WTC11 (cell line): ENCODE measurements at regions of chr11 and their contacts with region 1.

Region 1: GRCh38 chr11:17384002-17384511 is 4.4 kb downstream of the KCNJ11 start:
- DNase-seq: peak; percentile 84
- ATAC-seq: peak; percentile 71
- H3K4me3 Mint-ChIP-seq: no peak overlapping the region
- H3K27ac Mint-ChIP-seq: no peak overlapping the region
- H3K4me1 Mint-ChIP-seq: no peaks in the 10 kb centered on the region
- H3K27me3 Mint-ChIP-seq: peaks cover 7% of the 10 kb centered on the region
- CTCF ChIP-seq: peak; percentile 93

Region 2: DNA sequence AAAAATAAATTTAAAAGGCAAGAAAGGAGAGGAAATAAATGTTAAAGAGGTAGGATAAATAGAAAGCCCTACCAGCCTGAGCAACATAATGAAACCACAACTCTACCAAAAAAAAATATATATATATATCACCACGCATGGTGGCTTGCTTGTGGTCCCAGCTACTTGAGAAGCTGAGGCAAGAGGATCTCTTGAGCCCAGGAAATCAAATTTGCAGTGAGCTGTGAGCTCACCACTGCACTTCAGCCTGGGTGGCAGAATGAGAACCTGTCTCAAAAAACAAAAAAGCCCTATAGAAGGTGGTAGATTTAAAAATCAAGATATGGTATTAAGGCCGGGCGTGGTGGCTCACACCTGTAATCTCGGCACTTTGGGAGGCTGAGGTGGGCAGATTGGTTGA is 97.0 kb before region 1 on chr11:
- CTCF ChIA-PET with region 1: no interaction called
- POLR2A ChIA-PET with region 1: no interaction called
- DNase-seq: no peak
- ATAC-seq: no peak
- H3K4me3 Mint-ChIP-seq: no peak overlapping the region
- H3K27ac Mint-ChIP-seq: no peak overlapping the region
- H3K4me1 Mint-ChIP-seq: no peaks in the 10 kb centered on the region
- H3K27me3 Mint-ChIP-seq: no peaks in the 10 kb centered on the region
- CTCF ChIP-seq: no peak

Region 3: GRCh38 chr11:17473071-17473744 is 89.2 kb after region 1 on chr11:
- CTCF ChIA-PET with region 1: interaction called, 56 read pairs
- POLR2A ChIA-PET with region 1: interaction called, 3 read pairs
- DNase-seq: peak; percentile 76
- ATAC-seq: peak; percentile 91
- H3K4me3 Mint-ChIP-seq: peak overlapping the region; percentile 11; the same call in 1 of the 2 replicates
- H3K27ac Mint-ChIP-seq: no peak overlapping the region
- H3K4me1 Mint-ChIP-seq: peaks cover 14% of the 10 kb centered on the region
- H3K27me3 Mint-ChIP-seq: peaks cover 47% of the 10 kb centered on the region
- CTCF ChIP-seq: peak; percentile 25; the same call in 1 of the 2 replicates

Region 4: GRCh38 chr11:17490938-17491337 is 106.9 kb after region 1 on chr11:
- CTCF ChIA-PET with region 1: interaction called, 14 read pairs
- POLR2A ChIA-PET with region 1: no interaction called
- DNase-seq: no peak
- ATAC-seq: no peak
- H3K4me3 Mint-ChIP-seq: no peak overlapping the region
- H3K27ac Mint-ChIP-seq: no peak overlapping the region
- H3K4me1 Mint-ChIP-seq: no peaks in the 10 kb centered on the region
- H3K27me3 Mint-ChIP-seq: no peaks in the 10 kb centered on the region; the same call in 1 of the 2 replicates
- CTCF ChIP-seq: no peak

Region 5: DNA sequence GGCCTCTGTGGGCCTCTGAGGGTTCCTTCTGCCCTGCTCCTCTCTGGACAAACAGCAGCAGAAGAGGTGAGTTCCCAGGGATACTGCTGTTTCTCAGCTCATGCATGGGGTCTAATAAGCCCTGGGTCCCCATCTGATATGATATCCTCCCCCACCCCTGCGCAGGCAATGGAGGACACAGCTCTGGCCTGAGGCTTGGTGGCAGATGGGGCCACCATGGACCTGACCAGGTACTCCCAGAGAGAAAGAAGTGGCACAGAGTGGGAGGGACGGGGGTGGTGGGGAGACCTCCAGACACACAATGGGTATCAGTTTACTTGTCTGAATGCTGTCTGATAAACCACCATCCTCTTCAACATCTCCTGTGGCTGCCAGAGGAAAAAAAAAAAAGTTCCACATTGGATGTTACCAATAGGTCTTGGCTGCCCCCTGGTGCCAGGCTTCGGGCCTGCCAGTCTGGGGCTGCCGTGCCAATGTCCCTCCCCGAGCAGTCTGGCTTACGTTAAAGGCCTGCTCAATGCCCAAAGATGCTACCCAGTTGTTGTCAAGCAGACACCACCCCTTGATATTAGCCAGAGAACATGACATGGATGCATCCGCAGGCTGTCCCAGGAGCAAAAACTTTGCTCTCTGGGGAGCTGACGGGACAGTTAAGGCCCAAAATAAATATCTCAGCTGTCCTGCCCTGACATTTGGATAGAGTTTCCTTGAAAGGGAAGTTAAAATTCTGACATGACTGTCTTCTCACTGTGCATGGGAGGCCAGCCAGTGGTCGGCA is 120.5 kb after region 1 on chr11:
- CTCF ChIA-PET with region 1: interaction called, 47 read pairs
- POLR2A ChIA-PET with region 1: interaction called, 3 read pairs
- DNase-seq: peak; percentile 84
- ATAC-seq: peak; percentile 86
- H3K4me3 Mint-ChIP-seq: no peak overlapping the region
- H3K27ac Mint-ChIP-seq: no peak overlapping the region
- H3K4me1 Mint-ChIP-seq: no peaks in the 10 kb centered on the region
- H3K27me3 Mint-ChIP-seq: peaks cover 2% of the 10 kb centered on the region; the same call in 1 of the 2 replicates
- CTCF ChIP-seq: peak; percentile 85

Region 6: GRCh38 chr11:17519061-17519885 is 135.2 kb after region 1 on chr11:
- CTCF ChIA-PET with region 1: interaction called, 203 read pairs
- POLR2A ChIA-PET with region 1: no interaction called
- DNase-seq: no peak
- ATAC-seq: peak; percentile 89
- H3K4me3 Mint-ChIP-seq: no peak overlapping the region
- H3K27ac Mint-ChIP-seq: peak overlapping the region; percentile 30; the same call in 1 of the 2 replicates
- H3K4me1 Mint-ChIP-seq: peaks cover 30% of the 10 kb centered on the region
- H3K27me3 Mint-ChIP-seq: no peaks in the 10 kb centered on the region; the same call in 1 of the 2 replicates
- CTCF ChIP-seq: no peak